Sciatic nerve (tissue), 2 donors: ENCODE measurements at regions of chr15 and their contacts with region 1.

Region 1: DNA sequence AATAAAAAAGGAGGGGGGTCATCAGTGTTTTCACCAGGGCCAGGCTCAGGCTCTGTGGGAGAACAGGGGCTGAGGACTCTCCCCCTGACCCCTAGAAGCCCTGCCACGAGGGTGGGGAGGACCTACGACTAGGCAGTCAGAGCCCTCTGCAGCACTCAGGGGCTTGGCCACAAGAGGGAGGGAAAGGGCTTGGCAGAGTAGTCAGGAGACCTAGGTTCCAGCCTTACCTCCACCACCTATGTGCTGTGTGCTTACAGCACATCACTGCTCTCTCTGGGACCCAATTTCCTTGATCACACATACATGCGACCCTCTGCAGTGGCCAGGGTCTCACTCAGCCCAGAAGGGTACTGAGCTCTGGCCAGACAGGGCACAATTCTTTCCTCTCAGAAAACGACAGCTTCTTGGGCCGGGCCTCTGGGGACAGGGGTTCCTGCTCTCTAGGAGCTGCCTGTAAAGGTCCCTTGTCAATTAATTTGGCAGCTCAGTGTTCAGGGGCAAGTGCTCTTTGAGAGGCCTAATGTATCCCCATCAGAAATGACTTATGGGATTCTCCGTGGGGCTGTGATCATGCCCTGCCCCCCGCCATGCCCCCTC is 16.4 kb upstream of the SKIC8 start:
- DNase-seq: peak; percentile 44
- ATAC-seq: no peak

Region 2: DNA sequence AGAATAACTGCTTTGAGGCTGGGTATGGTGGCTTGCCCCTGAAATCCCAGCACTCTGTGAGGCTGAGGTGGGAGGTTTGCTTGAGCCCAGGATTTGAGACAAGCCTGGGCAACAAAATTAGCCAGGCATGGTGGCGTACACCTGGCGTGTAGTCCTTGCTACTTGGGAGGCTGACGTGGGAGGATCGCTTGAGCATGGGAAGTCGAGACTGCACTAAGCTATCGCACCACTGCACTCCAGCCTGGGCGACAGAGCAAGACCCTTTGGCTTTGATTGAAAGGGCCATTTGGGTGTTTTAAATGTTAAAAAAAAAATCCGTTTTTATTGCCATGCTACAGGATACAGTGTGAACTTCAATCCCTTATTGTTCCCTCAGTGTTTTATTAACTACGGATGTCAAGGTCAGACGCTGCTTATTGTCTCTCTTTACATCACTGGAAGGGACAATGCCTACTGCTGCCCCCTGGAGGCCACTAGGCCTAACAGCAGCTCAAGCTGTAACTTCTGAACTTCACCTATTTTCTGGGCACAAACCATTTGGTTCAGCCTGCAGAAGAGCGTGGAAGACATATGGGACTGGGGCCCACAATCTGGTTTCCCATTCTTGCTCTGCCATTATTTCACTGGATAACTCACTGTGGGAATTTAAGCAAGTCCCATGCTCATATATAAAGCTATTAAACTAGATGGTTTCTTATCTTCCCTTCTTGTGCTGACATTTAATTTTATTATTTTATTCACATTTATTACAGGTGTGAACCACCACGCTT is 107.0 kb after region 1 on chr15:
- intact Hi-C with region 1: loop called (anchors 5 kb)
- DNase-seq: peak; percentile 77
- ATAC-seq: peak; percentile 75

Region 3: DNA sequence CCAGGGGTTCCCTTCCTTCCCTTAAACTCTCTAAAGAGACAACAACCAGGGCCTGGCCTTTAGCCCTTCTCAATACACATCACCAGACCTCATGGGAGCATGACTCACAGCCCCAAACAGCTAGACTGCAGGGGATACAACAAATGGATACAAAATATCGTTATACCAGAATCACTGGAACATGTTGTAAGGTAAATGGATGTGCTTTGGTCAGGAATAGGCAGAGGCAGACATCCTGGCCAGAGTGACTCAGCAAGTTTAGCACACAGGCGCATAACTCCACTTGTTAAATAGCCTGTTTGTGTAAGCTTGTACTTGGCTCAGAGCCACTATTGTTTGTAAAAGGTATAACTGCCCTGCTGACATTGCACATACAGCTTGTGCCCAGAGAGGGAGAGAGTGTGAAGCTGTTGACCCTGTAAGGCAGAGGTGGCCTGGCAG is 1013.4 kb after region 1 on chr15:
- intact Hi-C with region 1: no loop called
- DNase-seq: no peak
- ATAC-seq: no peak

Region 4: GRCh38 chr15:79442911-79443310 is 1127.1 kb after region 1 on chr15:
- intact Hi-C with region 1: loop called (anchors 5 kb)
- DNase-seq: no peak
- ATAC-seq: no peak